Right cardiac atrium (tissue), 5 donors: ENCODE measurements at regions of chr15 and their contacts with region 1.

Region 1: DNA sequence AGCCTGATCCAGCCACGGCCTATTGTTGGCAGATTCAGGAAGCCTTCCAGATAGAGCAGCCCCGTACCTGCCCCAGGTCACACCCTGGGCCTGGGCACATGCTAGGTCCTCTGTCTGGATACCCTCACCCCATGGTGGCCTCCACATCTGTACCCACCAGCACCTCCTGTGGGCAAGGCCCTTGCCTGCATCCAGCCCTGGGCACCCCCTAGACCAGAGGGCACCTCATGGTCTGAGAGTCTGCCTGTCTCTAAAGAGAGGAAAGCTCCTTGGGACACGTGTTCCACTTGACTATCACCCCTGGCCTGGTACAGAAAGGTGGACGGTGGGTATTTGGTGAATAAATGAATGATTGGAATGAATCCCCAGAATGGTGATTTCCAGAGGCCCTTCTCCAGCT is 8.9 kb upstream of the COMMD4 start:
- DNase-seq: no peak
- ATAC-seq: no peak
- H3K4me3 ChIP-seq: no peak overlapping the region
- H3K27ac ChIP-seq: no peak overlapping the region
- H3K4me1 ChIP-seq: no peaks in the 10 kb centered on the region
- H3K27me3 ChIP-seq: no peaks in the 10 kb centered on the region

Region 2: GRCh38 chr15:75229191-75230015 is 97.6 kb before region 1 on chr15:
- intact Hi-C with region 1: loop called in 1 of 4 experiments (anchors 10 kb)
- DNase-seq: peak in 1 of 3 donors; percentile 29
- ATAC-seq: no peak
- H3K4me3 ChIP-seq: no peak overlapping the region
- H3K27ac ChIP-seq: no peak overlapping the region
- H3K4me1 ChIP-seq: no peaks in the 10 kb centered on the region
- H3K27me3 ChIP-seq: no peaks in the 10 kb centered on the region